T-cell (primary cell): ENCODE measurements at regions of chr4 and their contacts with region 1.

Region 1: GRCh38 chr4:173370477-173371291 is at the start of gene SAP30:
- DNase-seq: peak; percentile 89 to 99 (median 96)
- ATAC-seq: peak; percentile 83 to 89 (median 88)
- H3K4me3 ChIP-seq: peak within 1 kb of the TSS; percentile 95 to 98
- H3K4me3 Mint-ChIP-seq: peak within 1 kb of the TSS; percentile 90 to 100 (median 99)
- H3K27ac ChIP-seq: peak within 1 kb of the TSS; percentile 60
- H3K27ac Mint-ChIP-seq: peak within 1 kb of the TSS; percentile 95
- H3K4me1 ChIP-seq: peaks cover 14 to 21% of the 10 kb centered on the region in 2 experiments
- H3K4me1 Mint-ChIP-seq: peaks cover 26 to 39% (median 31%) of the 10 kb centered on the region in 3 donors
- H3K27me3 ChIP-seq: peaks cover 0 to 17% of the 10 kb centered on the region in 2 experiments
- H3K27me3 Mint-ChIP-seq: peaks cover 5 to 7% of the 10 kb centered on the region in 2 donors
- total RNA-seq, gene SAP30: 2.8 to 5.8 (median 4.1) TPM

Region 2: GRCh38 chr4:173002830-173003561 is 367.7 kb before region 1 on chr4:
- CTCF ChIA-PET with region 1: interaction called in 1 of 2 experiments, 11 read pairs
- POLR2A ChIA-PET with region 1: no interaction called
- DNase-seq: no peak
- ATAC-seq: no peak
- H3K4me3 ChIP-seq: no peak overlapping the region
- H3K4me3 Mint-ChIP-seq: no peak overlapping the region
- H3K27ac ChIP-seq: no peak overlapping the region
- H3K27ac Mint-ChIP-seq: no peak overlapping the region
- H3K4me1 ChIP-seq: no peaks in the 10 kb centered on the region
- H3K4me1 Mint-ChIP-seq: no peaks in the 10 kb centered on the region
- H3K27me3 ChIP-seq: peaks cover 0 to 3% of the 10 kb centered on the region in 2 experiments
- H3K27me3 Mint-ChIP-seq: peaks cover 3 to 10% of the 10 kb centered on the region in 2 donors

Region 3: DNA sequence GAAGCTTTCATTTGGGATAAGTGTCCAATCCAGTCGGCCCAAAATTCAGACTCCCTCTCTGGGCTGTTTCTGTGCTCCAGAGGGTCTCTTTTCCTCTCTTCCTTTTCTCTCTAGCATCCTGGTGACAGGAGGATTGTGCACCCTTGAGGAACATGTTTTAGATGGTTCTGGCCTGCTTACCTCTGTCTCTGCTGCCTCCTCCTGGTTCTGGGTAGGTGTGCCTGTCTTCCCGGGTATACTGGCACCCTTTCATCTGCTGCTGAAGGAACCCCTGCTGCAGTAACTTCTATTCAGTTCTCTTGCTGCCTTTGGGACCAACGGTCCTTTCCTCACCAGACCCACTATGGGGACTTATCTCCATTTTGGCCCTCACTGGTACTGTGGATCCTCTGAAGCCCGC is 89.7 kb before region 1 on chr4:
- CTCF ChIA-PET with region 1: no interaction called
- POLR2A ChIA-PET with region 1: no interaction called
- DNase-seq: peak in 1 of 35 experiments; percentile 11
- ATAC-seq: no peak
- H3K4me3 ChIP-seq: no peak overlapping the region
- H3K4me3 Mint-ChIP-seq: peak overlapping the region in 1 of 3 donors; percentile 3
- H3K27ac ChIP-seq: no peak overlapping the region
- H3K27ac Mint-ChIP-seq: no peak overlapping the region
- H3K4me1 ChIP-seq: no peaks in the 10 kb centered on the region
- H3K4me1 Mint-ChIP-seq: peaks cover 0 to 10% (median 2%) of the 10 kb centered on the region in 3 donors
- H3K27me3 ChIP-seq: no peaks in the 10 kb centered on the region
- H3K27me3 Mint-ChIP-seq: no peaks in the 10 kb centered on the region

Region 4: GRCh38 chr4:173307778-173308177 is 62.9 kb before region 1 on chr4:
- CTCF ChIA-PET with region 1: no interaction called
- POLR2A ChIA-PET with region 1: no interaction called
- DNase-seq: no peak
- ATAC-seq: no peak
- H3K4me3 ChIP-seq: no peak overlapping the region
- H3K4me3 Mint-ChIP-seq: no peak overlapping the region
- H3K27ac ChIP-seq: no peak overlapping the region
- H3K27ac Mint-ChIP-seq: no peak overlapping the region
- H3K4me1 ChIP-seq: no peaks in the 10 kb centered on the region
- H3K4me1 Mint-ChIP-seq: no peaks in the 10 kb centered on the region
- H3K27me3 ChIP-seq: no peaks in the 10 kb centered on the region
- H3K27me3 Mint-ChIP-seq: no peaks in the 10 kb centered on the region

Region 5: DNA sequence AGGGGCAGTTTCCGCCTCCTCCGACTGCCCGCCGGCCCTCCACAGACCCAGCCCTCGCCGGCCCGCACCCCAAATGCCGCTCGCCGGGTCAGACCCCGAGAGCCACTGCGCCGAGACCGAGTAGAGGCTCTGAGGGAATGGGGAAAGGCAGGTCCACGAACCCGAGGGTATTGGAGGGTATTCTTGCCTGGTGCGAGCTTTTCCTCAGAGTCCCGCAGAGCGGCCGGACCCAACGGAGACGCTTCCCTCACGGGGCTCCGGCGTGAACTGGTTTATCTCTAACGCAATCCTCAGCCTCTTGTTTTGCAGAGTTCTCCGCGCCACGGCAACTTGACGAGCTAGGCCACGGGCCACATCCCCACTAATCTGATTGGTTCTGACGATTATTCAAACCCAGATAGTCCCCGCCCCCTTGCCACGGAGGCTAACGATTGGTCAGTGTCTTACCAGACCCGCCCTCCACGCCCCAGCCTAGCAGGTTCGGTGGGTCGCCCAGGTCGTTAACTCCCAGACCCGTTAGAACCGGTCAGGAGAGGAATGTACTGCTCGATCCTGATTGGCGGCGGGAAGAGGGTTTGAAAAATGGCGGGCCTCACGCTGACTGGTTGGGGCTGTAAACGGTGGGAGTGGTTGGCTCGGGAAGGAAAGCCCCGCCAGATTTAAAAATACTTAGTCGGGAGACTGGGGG is 36.5 kb before region 1 on chr4 and contains the start of gene HMGB2:
- CTCF ChIA-PET with region 1: interaction called, 4 to 40 read pairs
- POLR2A ChIA-PET with region 1: interaction called, 19 to 114 read pairs
- DNase-seq: peak; percentile 97 to 100 (median 99)
- ATAC-seq: peak; percentile 89 to 94 (median 92)
- H3K4me3 ChIP-seq: peak within 1 kb of the TSS; percentile 72 to 100
- H3K4me3 Mint-ChIP-seq: peak within 1 kb of the TSS; percentile 93 to 97 (median 96)
- H3K27ac ChIP-seq: peak within 1 kb of the TSS; percentile 91
- H3K27ac Mint-ChIP-seq: peak within 1 kb of the TSS; percentile 97 to 98
- H3K4me1 ChIP-seq: peaks cover 13 to 16% of the 10 kb centered on the region in 2 experiments
- H3K4me1 Mint-ChIP-seq: peaks cover 26 to 29% (median 27%) of the 10 kb centered on the region in 3 donors
- H3K27me3 ChIP-seq: no peaks in the 10 kb centered on the region
- H3K27me3 Mint-ChIP-seq: peaks cover 4 to 11% of the 10 kb centered on the region in 2 donors
- total RNA-seq, gene HMGB2: 87.6 to 151 (median 103) TPM

Region 6: GRCh38 chr4:173413036-173413435 is 42.4 kb after region 1 on chr4:
- CTCF ChIA-PET with region 1: interaction called, 4 to 11 read pairs
- POLR2A ChIA-PET with region 1: interaction called in 1 of 2 experiments, 9 read pairs
- DNase-seq: no peak
- ATAC-seq: no peak
- H3K4me3 ChIP-seq: no peak overlapping the region
- H3K4me3 Mint-ChIP-seq: no peak overlapping the region
- H3K27ac ChIP-seq: no peak overlapping the region
- H3K27ac Mint-ChIP-seq: no peak overlapping the region
- H3K4me1 ChIP-seq: no peaks in the 10 kb centered on the region
- H3K4me1 Mint-ChIP-seq: no peaks in the 10 kb centered on the region
- H3K27me3 ChIP-seq: no peaks in the 10 kb centered on the region
- H3K27me3 Mint-ChIP-seq: no peaks in the 10 kb centered on the region

Region 7: DNA sequence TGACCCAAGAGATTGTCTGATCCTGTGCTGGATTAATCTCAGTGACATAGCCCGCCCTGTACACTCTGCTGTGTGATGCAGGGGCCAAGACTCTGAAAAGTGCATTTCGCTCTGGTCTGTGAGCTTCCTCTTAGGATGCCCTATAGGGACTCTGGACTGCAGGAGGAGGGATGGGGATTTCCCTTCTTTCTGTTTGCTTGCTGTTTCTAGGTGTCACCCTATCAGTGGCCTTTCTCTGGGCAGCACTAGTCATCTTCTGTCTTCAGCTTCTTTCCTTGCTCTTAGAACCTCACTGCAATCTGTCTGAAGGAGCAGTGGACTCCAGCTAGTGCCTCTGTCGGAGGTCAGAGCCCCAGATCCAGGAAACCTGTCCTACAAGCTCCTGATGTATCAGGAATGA is 62.8 kb after region 1 on chr4:
- CTCF ChIA-PET with region 1: interaction called in 1 of 2 experiments, 14 read pairs
- POLR2A ChIA-PET with region 1: interaction called in 1 of 2 experiments, 4 read pairs
- DNase-seq: no peak
- ATAC-seq: no peak
- H3K4me3 ChIP-seq: no peak overlapping the region
- H3K4me3 Mint-ChIP-seq: no peak overlapping the region
- H3K27ac ChIP-seq: no peak overlapping the region
- H3K27ac Mint-ChIP-seq: no peak overlapping the region
- H3K4me1 ChIP-seq: no peaks in the 10 kb centered on the region
- H3K4me1 Mint-ChIP-seq: peaks cover 0 to 6% (median 0%) of the 10 kb centered on the region in 3 donors
- H3K27me3 ChIP-seq: no peaks in the 10 kb centered on the region
- H3K27me3 Mint-ChIP-seq: no peaks in the 10 kb centered on the region

Region 8: GRCh38 chr4:173642509-173642908 is 271.8 kb after region 1 on chr4:
- CTCF ChIA-PET with region 1: no interaction called
- POLR2A ChIA-PET with region 1: no interaction called
- DNase-seq: no peak
- ATAC-seq: no peak
- H3K4me3 ChIP-seq: no peak overlapping the region
- H3K4me3 Mint-ChIP-seq: no peak overlapping the region
- H3K27ac ChIP-seq: no peak overlapping the region
- H3K27ac Mint-ChIP-seq: no peak overlapping the region
- H3K4me1 ChIP-seq: no peaks in the 10 kb centered on the region
- H3K4me1 Mint-ChIP-seq: no peaks in the 10 kb centered on the region
- H3K27me3 ChIP-seq: peaks cover 0 to 3% of the 10 kb centered on the region in 2 experiments
- H3K27me3 Mint-ChIP-seq: peaks cover 0 to 8% of the 10 kb centered on the region in 2 donors